MCF 10A (cell line): ENCODE measurements at regions of chr22 and their contacts with region 1.

Region 1: DNA sequence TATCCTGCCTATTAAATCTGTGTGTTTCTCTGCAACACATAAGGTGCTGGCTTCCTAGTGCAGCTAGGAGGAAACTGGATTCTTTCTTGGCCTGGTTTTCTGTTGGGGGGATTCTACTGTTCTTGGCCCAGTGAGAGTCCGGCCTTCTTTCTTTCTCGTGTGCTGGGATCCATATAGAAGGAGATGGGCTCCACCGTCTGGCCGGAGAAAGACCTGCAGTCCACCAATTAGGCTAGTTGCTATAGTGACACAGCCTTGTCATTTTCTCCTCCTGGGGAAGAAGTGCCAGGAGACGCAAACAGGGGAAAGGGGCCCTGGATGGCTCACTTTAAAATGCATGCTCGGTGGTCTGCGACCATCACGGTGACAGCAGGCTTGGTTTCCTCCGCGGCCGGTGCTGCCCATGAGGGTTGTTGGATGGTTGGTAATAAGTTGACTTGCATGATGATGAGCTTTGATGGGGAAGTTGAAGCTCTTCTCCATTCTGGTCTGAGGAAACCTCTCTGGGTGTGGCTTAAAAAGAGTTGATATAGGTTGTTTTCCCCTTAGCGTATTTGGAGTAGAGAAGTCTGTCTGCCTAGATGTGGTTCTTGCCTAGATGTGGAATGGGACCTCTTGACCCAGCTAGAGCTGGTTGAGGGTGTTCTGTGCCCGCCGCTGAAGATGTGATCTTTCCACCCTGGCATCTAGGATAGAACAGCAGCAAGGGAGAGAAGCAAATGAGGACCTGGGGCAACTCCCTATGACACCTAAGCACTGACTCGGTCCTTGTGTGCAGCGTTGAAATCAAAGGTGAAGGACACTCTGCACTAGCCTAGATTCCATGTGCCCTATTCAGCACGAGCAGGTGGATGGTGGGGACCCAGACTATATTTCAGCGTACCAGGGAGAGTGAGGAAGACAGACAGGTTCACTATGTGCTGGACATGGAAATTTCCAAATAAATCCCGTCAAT is 1335.0 kb downstream of the BRD1 start:
- DNase-seq: peak; percentile 21
- H3K4me3 Mint-ChIP-seq: no peak overlapping the region
- H3K27ac Mint-ChIP-seq: no peak overlapping the region
- H3K4me1 Mint-ChIP-seq: no peaks in the 10 kb centered on the region
- H3K27me3 Mint-ChIP-seq: no peaks in the 10 kb centered on the region
- CTCF ChIP-seq: peak; percentile 55

Region 2: DNA sequence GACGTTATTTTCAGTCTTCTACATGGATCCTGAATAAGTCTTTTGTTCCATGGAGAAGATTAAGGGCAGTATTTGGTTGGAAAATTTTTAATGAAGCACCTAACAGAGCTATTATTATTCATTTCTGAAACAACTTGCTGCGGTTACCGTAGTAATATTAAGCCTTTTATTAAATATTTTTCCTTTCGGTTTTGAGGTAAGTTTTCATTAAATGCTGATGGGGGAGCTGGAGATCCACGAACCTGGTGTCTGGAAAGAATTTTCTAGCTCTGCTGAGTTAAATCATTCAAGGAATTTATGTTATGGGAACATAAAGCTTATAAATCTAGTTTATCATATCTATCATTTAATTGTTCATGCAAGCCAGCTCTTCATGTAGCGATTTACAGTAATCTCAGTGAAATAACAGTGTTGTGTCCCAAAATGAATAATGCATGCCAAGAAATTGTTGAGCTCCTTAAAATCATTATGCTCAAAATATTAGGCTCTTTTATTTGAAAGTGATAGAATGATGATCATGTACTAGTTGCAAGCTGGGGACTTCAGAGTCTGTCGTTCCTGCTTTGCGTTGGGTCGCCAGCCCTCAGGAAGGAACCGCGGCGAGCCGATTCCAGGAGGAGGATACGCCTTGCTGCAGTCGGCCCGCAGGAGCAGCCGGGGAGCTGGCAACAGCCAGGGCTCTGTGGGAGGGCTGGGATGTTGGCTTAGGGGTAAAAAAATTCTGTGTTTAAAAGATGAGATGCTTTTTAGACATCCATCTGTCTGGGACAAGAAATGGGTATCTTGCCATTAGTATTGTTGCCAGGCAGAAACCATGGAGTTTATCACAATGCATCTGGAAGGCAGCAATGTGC is 1647.1 kb before region 1 on chr22:
- CTCF ChIA-PET with region 1: interaction called, 3 read pairs
- POLR2A ChIA-PET with region 1: interaction called, 3 read pairs
- intact Hi-C with region 1: loop called (anchors 5 kb)
- DNase-seq: no peak
- H3K4me3 Mint-ChIP-seq: no peak overlapping the region
- H3K27ac Mint-ChIP-seq: no peak overlapping the region
- H3K4me1 Mint-ChIP-seq: peaks cover 53% of the 10 kb centered on the region
- H3K27me3 Mint-ChIP-seq: no peaks in the 10 kb centered on the region
- CTCF ChIP-seq: peak; percentile 14

Region 3: DNA sequence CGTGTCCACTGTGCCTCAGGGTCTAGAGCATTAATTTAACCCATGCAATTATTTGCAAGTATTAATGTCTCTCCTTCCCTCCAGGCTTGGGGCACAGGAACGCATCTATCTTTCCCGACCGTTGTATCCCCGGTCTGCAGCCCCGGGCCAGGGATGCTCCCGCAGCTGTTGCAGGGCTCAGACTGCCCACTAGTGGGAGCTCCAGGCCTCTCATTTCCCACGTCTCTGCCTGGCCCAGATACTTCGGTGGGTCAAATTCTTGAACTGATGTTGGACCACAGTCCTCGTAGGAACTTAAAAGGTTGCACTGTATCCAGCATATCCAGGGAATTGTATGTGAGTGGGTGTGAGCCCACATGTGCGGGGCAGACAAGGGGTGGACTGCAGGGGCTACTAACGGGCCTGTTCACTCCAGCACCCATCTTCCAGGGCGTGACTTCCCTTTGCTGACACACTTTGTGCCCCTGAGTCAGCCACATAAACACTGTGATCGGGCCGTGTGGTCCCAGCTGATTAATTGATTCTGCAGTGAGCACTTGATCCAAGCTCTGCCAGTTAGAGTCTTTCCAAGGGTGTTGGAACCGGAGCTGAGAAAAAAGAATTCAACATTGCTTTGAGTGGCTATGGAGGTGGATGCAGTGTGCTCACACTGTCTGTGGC is 1278.9 kb before region 1 on chr22:
- CTCF ChIA-PET with region 1: no interaction called
- POLR2A ChIA-PET with region 1: no interaction called
- intact Hi-C with region 1: loop called (anchors 10 kb)
- DNase-seq: peak; percentile 32
- H3K4me3 Mint-ChIP-seq: no peak overlapping the region
- H3K27ac Mint-ChIP-seq: no peak overlapping the region
- H3K4me1 Mint-ChIP-seq: peaks cover 5% of the 10 kb centered on the region
- H3K27me3 Mint-ChIP-seq: no peaks in the 10 kb centered on the region
- CTCF ChIP-seq: peak; percentile 77

Region 4: GRCh38 chr22:47515384-47516122 is 977.1 kb before region 1 on chr22:
- CTCF ChIA-PET with region 1: no interaction called
- POLR2A ChIA-PET with region 1: no interaction called
- intact Hi-C with region 1: loop called (anchors 5 kb)
- DNase-seq: no peak
- H3K4me3 Mint-ChIP-seq: no peak overlapping the region
- H3K27ac Mint-ChIP-seq: no peak overlapping the region
- H3K4me1 Mint-ChIP-seq: no peaks in the 10 kb centered on the region
- H3K27me3 Mint-ChIP-seq: no peaks in the 10 kb centered on the region
- CTCF ChIP-seq: no peak

Region 5: DNA sequence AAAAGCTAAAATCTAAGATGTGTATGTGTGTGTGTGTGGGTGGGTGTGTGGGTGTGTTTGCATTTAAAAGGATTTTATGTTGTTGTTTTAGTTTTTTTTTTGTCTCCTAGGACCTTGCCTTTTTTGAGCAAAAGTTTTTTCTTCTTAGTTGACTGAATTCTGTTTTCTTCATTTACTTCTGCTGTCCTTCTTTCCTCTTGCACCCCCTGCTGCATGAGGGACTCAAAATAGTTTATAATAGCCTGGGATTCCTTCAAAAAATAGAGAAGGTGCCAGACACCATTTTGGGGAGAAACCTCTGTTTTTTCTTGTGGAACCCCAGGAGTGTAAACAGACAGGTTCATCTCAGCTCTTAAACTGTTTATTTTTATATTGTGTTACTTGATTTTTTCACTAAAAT is 912.5 kb before region 1 on chr22:
- CTCF ChIA-PET with region 1: no interaction called
- POLR2A ChIA-PET with region 1: no interaction called
- intact Hi-C with region 1: loop called (anchors 5 kb)
- DNase-seq: no peak
- H3K4me3 Mint-ChIP-seq: no peak overlapping the region
- H3K27ac Mint-ChIP-seq: peak overlapping the region; percentile 21
- H3K4me1 Mint-ChIP-seq: peaks cover 13% of the 10 kb centered on the region
- H3K27me3 Mint-ChIP-seq: no peaks in the 10 kb centered on the region
- CTCF ChIP-seq: no peak

Region 6: GRCh38 chr22:47626428-47627390 is 865.9 kb before region 1 on chr22:
- CTCF ChIA-PET with region 1: no interaction called
- POLR2A ChIA-PET with region 1: no interaction called
- intact Hi-C with region 1: loop called (anchors 5 kb)
- DNase-seq: no peak
- H3K4me3 Mint-ChIP-seq: no peak overlapping the region
- H3K27ac Mint-ChIP-seq: no peak overlapping the region
- H3K4me1 Mint-ChIP-seq: no peaks in the 10 kb centered on the region
- H3K27me3 Mint-ChIP-seq: peaks cover 22% of the 10 kb centered on the region
- CTCF ChIP-seq: peak; percentile 38

Region 7: DNA sequence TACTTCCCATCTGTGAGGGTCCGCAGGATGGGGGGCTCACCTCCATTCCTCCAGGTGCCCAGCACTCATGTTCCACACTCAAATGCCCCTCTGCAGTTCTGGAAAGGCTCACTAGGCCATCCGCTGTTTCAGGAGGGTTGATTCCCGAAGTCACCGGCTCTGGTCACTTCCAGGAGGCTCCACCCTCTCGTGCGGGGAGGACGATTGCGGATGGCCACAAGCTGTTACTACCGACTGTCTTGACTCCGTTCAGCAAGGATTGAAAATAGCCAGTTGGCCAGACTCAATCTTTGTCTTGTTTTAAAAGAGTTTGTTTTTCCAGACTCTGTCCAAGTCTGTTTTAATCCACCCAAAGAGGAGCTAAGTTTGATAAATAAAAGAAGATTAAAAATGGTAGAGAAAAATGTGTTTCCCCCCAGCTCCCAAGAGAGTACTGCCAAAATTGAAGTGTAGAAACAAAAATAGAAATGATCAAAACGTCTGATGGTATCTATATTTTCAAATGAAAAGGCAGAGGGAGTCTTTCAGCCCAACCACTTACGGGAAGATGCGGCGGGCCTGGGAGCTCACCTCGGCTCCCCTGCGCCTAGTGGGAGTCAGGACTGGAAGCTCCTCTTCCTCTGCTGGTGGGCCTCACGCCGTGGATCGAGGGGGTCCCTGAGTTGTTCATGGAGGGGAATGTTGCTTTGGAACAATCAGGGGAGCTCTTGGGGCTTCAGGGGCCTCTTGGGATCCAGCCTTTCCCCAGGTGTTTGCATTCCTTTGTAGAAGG is 54.2 kb after region 1 on chr22:
- CTCF ChIA-PET with region 1: no interaction called
- POLR2A ChIA-PET with region 1: no interaction called
- intact Hi-C with region 1: no loop called
- DNase-seq: no peak
- H3K4me3 Mint-ChIP-seq: no peak overlapping the region
- H3K27ac Mint-ChIP-seq: no peak overlapping the region
- H3K4me1 Mint-ChIP-seq: no peaks in the 10 kb centered on the region
- H3K27me3 Mint-ChIP-seq: no peaks in the 10 kb centered on the region
- CTCF ChIP-seq: no peak